RWPE1 (cell line): ENCODE measurements at regions of chr12 and their contacts with region 1.

Region 1: DNA sequence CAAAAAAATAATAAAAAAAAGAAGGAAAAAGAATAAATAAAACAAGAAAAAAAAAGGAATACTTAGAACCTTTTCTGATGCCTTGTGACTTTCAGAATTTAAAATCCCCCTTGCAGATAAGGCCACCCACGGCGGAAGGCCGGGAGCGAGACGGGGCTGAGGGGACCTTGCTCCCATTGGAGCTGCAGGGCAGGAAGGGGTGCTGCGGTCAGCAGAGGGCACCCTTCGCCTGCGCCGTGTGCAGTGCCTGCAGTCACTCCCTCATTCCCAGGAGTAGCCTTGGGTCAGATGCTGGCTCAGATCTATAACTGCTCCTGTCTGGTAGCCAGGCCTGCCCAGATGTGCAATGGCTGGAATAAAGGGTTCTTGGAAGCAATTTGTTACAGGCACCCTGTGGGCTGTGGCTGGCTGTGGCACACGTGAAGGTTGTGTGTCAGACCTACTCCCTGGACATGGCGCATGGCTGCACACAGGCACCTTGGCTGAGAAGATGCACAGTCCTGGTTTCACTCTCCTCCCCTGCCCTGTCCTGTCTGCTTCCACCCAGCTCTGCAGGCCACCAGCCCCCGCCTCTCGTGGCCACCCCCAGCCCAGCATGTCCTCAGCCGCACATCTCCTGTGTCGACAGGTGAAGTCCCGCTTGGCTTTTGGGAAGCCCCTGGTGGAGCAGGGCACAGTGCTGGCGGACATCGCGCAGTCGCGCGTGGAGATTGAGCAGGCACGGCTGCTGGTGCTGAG is 13.4 kb upstream of the ALDH2 start:
- DNase-seq: peak; percentile 61
- H3K27ac ChIP-seq: peak overlapping the region; percentile 38
- CTCF ChIP-seq: peak; percentile 82

Region 2: DNA sequence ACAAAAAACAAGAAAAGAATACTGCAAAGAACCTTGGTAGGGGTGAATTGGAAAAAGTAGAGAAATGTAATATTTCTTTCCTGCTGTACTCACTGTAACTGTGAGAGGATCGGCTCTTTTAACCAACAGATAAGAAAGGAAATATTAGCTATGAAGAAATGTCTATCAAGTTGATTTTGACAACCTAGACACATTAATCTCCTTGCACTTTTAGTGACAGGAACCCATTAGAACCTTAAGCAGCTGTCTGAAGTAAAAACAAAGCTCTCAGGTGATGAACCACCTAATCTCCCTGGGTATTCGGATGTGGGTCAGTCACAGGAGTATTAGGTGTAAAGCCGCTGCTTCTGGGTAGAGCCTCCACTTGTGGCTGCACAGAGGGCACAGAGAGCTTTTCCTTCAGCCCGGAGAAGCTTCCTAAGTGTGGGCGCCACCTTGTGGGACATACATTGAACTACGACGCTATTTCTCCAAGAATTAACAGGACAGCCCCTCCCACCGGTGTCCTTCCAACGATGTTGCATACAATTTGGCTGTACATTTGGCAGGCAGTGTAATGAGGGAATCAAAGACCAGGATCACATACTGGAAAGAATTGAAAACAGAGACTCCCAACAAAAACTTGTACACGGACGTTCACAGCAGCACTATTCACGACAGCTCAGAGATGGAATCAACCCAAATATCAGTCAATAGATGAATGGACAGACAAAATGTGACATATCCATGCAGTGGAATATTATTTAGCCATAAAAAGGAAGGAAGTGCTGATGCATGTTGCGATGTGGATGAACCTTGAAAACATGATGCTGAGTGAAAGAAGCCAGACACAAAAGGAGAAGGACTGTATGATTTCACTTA is 59.8 kb after region 1 on chr12:
- CTCF ChIA-PET with region 1: interaction called, 29 read pairs
- POLR2A ChIA-PET with region 1: no interaction called
- DNase-seq: peak; percentile 87
- H3K27ac ChIP-seq: no peak overlapping the region
- CTCF ChIP-seq: peak; percentile 87